H1 (cell line): ENCODE measurements at regions of chr14 and their contacts with region 1.

Region 1: GRCh38 chr14:55051426-55052268 is at the start of gene MAPK1IP1L:
- DNase-seq: peak; percentile 79 to 99
- H3K4me3 ChIP-seq: peak within 1 kb of the TSS; percentile 77 to 97 (median 94)
- H3K27ac ChIP-seq: peak within 1 kb of the TSS; percentile 99
- H3K4me1 ChIP-seq: peaks cover 0 to 2% (median 0%) of the 10 kb centered on the region in 4 experiments; a peak in 5 of 7 replicates
- H3K27me3 ChIP-seq: no peaks in the 10 kb centered on the region
- CTCF ChIP-seq: peak; percentile 92 to 98 (median 98)
- EP300 ChIP-seq: peak; percentile 48 to 79; a peak in 2 of 3 replicates
- POLR2A ChIP-seq: peak; percentile 95 to 99
- RAD21 ChIP-seq: peak; percentile 58 to 62
- total RNA-seq, gene MAPK1IP1L: 111 and 113 TPM in 2 replicates

Region 2: DNA sequence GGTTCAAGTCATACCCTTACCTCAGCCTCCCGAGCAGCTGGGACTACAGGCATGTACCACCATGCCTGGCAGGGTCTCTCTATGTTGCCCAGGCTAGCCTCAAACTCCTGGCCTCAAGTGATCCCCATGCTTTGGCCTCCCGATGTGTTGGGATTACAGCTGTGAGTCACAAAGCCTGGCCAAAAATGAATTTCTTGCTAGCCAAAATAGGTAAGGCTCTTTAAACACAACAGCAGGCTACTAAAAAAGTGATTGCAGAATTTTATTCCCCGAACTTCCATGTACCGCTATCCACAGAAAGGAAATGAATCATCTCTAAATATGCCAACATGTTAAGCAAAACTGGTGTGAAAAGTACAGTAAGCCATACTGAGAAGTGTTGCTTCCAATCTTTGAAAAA is 75.3 kb before region 1 on chr14:
- CTCF ChIA-PET with region 1: no interaction called
- POLR2A ChIA-PET with region 1: no interaction called
- DNase-seq: no peak
- H3K4me3 ChIP-seq: no peak overlapping the region
- H3K27ac ChIP-seq: no peak overlapping the region
- H3K4me1 ChIP-seq: no peaks in the 10 kb centered on the region
- H3K27me3 ChIP-seq: no peaks in the 10 kb centered on the region
- CTCF ChIP-seq: no peak
- EP300 ChIP-seq: no peak
- POLR2A ChIP-seq: no peak
- RAD21 ChIP-seq: no peak

Region 3: GRCh38 chr14:55026793-55027561 is 24.7 kb before region 1 on chr14 and contains the starts of genes SOCS4 and WDHD1:
- CTCF ChIA-PET with region 1: interaction called, 22 read pairs
- POLR2A ChIA-PET with region 1: interaction called, 101 read pairs
- DNase-seq: peak; percentile 82 to 98
- H3K4me3 ChIP-seq: peak within 1 kb of the TSS; percentile 89 to 96 (median 94)
- H3K27ac ChIP-seq: peak within 1 kb of the TSS; percentile 97
- H3K4me1 ChIP-seq: peaks cover 0 to 10% (median 1%) of the 10 kb centered on the region in 4 experiments; a peak in 3 of 7 replicates
- H3K27me3 ChIP-seq: no peaks in the 10 kb centered on the region
- CTCF ChIP-seq: peak in 1 of 3 experiments; percentile 7; a peak in 1 of 4 replicates
- EP300 ChIP-seq: no peak
- POLR2A ChIP-seq: peak; percentile 71 to 98
- RAD21 ChIP-seq: no peak
- total RNA-seq, gene SOCS4: 24.8 and 31.5 TPM in 2 replicates
- total RNA-seq, gene WDHD1: 79.9 and 87.9 TPM in 2 replicates

Region 4: GRCh38 chr14:55065411-55065810 is 13.8 kb after region 1 on chr14:
- CTCF ChIA-PET with region 1: interaction called, 9 read pairs
- POLR2A ChIA-PET with region 1: interaction called, 45 read pairs
- DNase-seq: no peak
- H3K4me3 ChIP-seq: no peak overlapping the region
- H3K27ac ChIP-seq: no peak overlapping the region
- H3K4me1 ChIP-seq: no peaks in the 10 kb centered on the region
- H3K27me3 ChIP-seq: peaks cover 0 to 1% (median 0%) of the 10 kb centered on the region in 4 experiments; a peak in 1 of 7 replicates
- CTCF ChIP-seq: no peak
- EP300 ChIP-seq: no peak
- POLR2A ChIP-seq: no peak
- RAD21 ChIP-seq: no peak

Region 5: DNA sequence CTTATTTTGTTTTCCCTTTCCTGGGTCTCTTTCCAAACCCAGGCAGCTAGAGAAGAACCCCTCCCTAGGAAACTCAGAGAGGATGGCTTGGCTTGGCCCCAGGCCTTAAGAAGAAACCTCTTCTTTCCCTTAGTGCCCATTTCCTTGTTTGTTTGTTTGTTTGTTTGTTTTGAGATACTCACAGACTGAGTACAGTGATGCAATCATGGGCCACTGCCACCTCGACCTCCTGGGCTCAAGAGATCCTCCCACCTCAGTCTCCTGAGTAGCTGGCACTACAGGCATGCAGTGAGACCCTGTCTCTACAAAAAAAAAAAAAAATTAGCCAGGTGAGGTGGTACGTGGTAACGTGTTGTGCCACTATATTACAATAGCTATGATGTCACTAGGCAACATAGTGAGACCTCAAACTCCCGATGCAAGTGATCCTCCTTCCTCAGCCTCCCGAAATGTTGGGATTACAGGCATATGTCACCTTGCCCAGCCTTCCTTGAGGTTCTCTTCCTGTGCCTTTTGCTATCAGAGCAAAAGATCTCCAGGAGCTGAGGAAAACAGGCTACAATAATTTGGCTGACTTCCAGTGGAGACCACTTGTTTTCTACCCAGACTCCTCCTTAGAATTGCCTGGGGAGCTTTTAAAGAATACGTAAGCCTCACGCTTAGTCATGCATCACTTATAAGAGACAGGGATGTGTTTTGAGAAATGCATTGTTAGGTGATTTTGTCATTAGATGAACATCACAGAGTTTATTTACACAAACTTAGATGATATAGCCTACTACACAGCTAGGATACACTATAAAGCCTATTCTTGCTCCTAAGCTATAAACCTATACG is 42.9 kb after region 1 on chr14:
- CTCF ChIA-PET with region 1: interaction called, 5 read pairs
- POLR2A ChIA-PET with region 1: interaction called, 17 read pairs
- DNase-seq: no peak
- H3K4me3 ChIP-seq: no peak overlapping the region
- H3K27ac ChIP-seq: no peak overlapping the region
- H3K4me1 ChIP-seq: no peaks in the 10 kb centered on the region
- H3K27me3 ChIP-seq: no peaks in the 10 kb centered on the region
- CTCF ChIP-seq: no peak
- EP300 ChIP-seq: no peak
- POLR2A ChIP-seq: no peak
- RAD21 ChIP-seq: no peak